ENCODE measurements at regions of chr22 and their contacts with region 1.

Region 1: DNA sequence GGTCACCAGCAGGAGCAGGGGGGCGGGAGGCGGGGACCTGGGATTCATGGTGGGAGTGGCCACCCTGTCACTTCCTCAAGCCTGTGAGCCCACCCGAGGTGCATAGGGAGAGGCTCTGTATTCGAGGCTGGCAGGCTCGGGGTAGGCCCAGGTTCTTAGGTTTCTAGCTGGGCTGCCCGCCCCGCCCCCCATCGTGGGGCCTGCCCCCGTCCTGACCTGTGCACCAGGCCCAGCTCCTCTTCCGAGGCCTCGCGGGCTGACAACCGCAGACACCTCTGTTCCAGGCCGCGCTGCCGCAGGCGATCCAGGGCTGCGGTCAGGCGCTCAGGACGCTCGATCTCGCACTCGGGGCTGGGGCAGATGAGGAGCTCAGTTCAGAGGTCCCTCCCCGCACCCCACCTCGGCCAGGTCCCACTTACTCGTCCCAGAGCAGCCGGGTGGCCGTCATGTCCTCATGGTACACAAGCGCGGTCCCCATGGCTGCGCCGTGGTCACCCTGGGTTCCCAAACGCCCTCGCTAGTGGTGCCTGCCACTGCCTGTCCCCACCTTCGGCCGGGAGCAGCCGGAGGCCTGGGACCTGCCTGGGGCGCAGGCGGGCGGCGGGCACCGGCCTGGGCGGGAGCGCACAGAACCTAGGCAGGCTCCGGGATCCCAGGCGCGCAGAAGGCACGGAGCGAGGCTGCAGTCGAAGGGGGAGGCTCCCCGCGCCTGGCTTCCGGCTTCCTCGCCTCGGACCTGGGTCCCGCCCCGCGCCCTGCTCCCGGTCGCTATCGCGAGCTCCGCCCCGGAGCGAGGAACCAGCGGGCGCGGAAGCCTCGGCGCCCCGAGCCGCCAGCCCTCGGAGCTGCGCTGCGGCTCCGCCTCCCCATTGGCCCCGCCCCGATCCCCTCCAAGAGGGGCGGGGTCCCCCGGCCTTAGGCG is at the start of gene HDAC10:
- DNase-seq: peak; percentile 88
- ATAC-seq: peak; percentile 83
- total RNA-seq, gene HDAC10: 11.2 to 14.2 TPM

Region 2: GRCh38 chr22:50341977-50342650 is 91.3 kb after region 1 on chr22:
- intact Hi-C with region 1: loop called in 1 of 2 experiments (anchors 5 kb)
- DNase-seq: peak; percentile 91
- ATAC-seq: peak; percentile 87 to 89

Region 3: DNA sequence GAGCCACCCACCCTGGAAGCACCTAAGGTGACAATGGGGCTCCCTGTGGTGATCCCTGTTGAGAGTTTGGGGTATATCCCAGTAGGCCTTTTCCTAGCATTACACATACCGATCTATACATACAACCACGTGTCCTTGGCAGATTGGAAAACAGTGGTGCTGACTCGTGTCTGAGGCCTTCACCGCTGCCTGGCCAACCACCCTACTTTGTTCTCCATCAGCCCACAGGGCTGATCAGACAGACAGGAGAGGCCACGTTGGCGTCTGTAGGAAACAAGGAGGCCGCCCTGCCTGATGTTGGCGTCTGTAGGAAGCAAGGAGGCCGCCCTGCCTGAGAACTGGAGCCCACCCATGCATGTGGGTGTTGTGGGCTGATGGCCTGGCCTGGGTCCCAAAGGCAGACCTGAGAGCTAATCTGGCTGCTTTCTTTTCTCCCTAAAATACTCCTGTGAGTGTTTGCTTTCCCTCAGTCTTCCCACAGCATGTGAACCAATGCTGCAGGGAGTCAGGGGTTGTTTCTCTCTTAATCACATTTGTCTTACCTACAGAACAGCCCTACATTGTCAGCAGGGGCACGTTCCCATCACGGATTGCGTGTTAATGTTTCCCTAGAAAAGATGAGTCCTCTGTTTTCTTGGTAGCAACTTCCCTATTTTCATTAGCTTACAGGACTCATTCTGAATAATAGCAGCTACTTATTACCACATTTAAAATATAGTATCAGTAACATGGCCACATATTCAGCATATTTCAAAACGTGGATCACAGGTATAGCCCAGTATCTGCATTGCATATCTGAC is 166.8 kb after region 1 on chr22:
- intact Hi-C with region 1: no loop called
- DNase-seq: no peak
- ATAC-seq: no peak

Region 4: DNA sequence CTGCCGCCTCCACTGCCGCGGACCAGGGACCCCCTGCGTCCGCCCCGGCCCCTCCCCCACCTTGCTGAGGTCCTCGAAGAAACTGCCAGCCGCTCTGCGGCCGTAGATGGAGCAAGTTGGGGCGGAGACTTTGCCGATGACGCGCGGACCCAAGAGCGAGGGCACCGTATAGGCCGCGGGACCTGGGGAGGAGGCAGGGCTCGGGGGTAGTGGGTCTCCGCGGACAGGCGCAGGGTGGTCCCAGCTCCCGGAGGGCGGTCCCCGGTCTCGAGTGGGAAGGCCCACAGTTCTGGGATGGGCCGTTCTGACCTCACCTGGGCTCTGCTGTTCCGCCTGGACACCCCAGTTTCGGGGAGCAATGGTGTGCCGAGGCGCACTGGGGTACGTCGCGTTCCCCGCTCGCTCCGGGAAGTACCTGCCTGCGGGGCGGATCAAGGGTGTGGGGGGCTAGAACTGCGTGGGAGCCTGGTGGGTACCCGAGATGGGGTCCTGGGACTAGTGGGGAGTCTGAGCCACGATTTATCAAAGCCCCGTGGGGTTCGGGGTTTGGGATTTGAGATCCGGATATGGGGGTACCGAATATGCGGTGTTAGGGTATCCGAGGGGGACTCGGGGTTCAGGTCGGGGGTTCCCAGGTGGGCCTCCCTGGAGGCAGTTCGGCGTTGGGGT is 280.2 kb after region 1 on chr22:
- intact Hi-C with region 1: no loop called
- DNase-seq: peak; percentile 93
- ATAC-seq: peak; percentile 56 to 63

Measured in left cardiac atrium (tissue), 4 donors.